ENCODE measurements at regions of chr6 and their contacts with region 1.

Region 1: DNA sequence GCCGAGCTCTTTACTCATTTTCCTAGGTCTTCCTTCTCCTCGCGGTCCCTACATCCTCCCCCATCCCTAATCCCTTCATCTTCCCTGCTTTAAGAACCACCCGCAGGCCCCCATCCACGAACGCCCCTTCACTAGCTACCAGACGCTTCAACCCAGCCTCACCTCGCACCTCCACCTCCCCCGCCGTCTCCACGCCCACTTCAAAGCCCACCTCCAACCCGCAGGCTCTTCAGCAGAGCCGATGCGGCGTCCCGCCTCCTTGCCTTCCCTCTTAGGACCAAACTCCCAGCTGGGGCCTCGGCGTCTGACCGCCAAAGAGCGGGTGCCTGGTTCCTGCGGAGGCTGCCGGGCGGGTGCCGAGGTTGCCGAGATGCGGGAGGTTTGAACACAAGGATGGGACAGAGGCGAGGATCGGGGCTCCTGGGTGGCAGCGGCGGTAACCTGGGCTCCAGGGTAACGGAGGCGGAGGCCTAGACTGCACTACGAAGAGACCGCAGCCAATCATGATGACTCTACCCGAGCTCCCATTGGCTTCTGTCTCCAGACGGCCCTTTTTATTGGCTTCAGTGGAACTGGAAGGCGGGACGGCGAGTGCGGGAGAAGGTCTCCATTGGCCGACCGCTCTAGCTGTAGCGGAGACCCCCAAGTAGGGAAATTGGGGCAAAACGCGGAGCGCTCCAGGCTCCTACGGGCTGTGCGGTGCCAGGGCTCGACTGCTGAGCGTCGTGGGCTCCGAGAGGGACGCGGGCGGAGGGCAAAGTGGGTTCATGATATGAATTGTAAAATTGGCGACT is at the start of gene LCA5:
- DNase-seq: peak; percentile 95
- ATAC-seq: peak; percentile 99
- H3K4me3 ChIP-seq: peak within 1 kb of the TSS; percentile 80 to 89
- H3K27ac ChIP-seq: peak within 1 kb of the TSS; percentile 40 to 95
- H3K4me1 ChIP-seq: peaks cover 0 to 3% of the 10 kb centered on the region in 2 donors
- H3K27me3 ChIP-seq: no peaks in the 10 kb centered on the region
- total RNA-seq, gene LCA5: 7.6 to 8.8 TPM

Region 2: GRCh38 chr6:79078075-79079025 is 458.8 kb before region 1 on chr6 and contains the start of gene PHIP:
- intact Hi-C with region 1: loop called (anchors 2 to 10 kb)
- DNase-seq: peak; percentile 97 to 98
- ATAC-seq: peak; percentile 97
- H3K4me3 ChIP-seq: peak within 1 kb of the TSS; percentile 97 to 100
- H3K27ac ChIP-seq: peak within 1 kb of the TSS; percentile 72 to 87
- H3K4me1 ChIP-seq: no peaks in the 10 kb centered on the region
- H3K27me3 ChIP-seq: no peaks in the 10 kb centered on the region
- total RNA-seq, gene PHIP: 31.5 to 38.0 TPM